Activated CD8-positive, alpha-beta memory T cell treated with anti-CD3 and anti-CD28 coated beads, Interleukin-2, amount 10 ng/mL, durations not matched to agents 7 days and 5 days (primary cell): ENCODE measurements at regions of chr6 and their contacts with region 1.

Region 1: DNA sequence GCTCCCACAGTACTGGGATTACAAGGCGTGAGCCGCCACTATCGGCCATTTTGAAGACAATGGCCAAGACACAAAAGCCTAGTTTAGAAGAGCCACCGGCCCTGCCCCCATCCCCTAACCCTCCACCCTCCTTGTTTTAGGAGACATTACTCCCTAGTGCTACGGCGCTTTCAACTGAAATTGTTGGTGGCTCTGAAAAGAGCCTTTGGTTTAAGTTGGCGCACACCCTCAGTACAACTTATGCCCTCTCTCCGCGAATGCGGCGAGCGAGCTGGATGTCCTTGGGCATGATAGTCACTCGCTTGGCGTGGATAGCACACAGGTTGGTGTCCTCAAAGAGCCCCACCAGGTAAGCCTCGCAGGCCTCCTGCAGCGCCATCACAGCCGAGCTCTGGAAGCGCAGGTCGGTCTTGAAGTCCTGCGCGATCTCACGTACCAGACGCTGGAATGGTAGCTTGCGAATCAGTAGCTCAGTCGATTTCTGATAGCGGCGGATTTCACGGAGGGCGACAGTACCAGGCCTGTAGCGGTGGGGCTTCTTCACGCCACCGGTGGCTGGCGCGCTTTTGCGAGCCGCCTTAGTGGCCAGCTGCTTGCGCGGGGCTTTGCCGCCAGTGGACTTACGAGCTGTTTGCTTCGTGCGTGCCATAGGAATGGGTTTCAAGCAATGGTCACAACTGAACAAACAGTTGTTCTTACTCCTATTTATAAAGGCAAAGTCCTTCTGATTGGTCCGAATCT is 114.9 kb upstream of the BTN3A2 start:
- DNase-seq: peak; percentile 88
- ATAC-seq: peak; percentile 56
- H3K4me3 Mint-ChIP-seq: peak overlapping the region; percentile 95
- H3K27ac Mint-ChIP-seq: peak overlapping the region; percentile 100
- H3K4me1 Mint-ChIP-seq: peaks cover 24% of the 10 kb centered on the region
- H3K27me3 Mint-ChIP-seq: no peaks in the 10 kb centered on the region

Region 2: DNA sequence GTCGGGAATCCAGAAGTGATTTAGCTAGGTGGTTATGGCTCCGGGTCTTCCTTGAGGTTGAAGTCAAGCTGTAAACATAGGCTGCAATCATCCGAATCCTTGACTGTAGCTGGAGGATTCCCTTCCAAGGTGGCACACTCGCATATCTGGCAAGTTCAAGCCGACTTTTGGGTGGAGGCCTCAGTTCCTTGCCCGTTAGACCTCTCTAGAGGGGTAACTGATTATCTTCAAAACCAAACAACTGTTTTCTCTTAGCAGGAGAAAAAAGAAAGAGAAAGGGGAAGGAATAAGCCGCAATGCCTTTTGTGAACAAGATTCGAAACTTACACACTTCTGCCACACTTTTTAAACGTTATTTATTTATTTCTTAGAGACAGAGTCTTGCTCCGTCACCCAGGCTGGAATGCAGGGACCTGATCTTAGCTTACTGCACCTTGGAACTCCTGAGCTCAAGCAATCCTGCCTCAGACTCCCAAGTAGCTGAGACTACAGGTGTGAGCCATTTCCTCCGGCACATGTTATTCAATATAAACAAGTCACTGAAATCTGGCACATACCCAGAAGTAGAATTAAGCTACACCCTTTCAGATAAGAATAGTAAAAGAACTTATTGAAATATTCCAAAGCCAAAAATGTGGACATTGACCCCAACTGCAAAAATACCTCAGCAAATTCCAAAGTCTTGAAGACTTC is 86.6 kb before region 1 on chr6:
- CTCF ChIA-PET with region 1: no interaction called
- DNase-seq: no peak
- ATAC-seq: no peak
- H3K4me3 Mint-ChIP-seq: no peak overlapping the region
- H3K27ac Mint-ChIP-seq: peak overlapping the region; percentile 61
- H3K4me1 Mint-ChIP-seq: peaks cover 43% of the 10 kb centered on the region
- H3K27me3 Mint-ChIP-seq: peaks cover 2% of the 10 kb centered on the region

Region 3: GRCh38 chr6:26234421-26235296 is 15.5 kb before region 1 on chr6:
- CTCF ChIA-PET with region 1: interaction called, 30 read pairs
- DNase-seq: peak; percentile 89
- ATAC-seq: peak; percentile 67
- H3K4me3 Mint-ChIP-seq: peak overlapping the region; percentile 82
- H3K27ac Mint-ChIP-seq: peak overlapping the region; percentile 98
- H3K4me1 Mint-ChIP-seq: peaks cover 38% of the 10 kb centered on the region
- H3K27me3 Mint-ChIP-seq: peaks cover 2% of the 10 kb centered on the region

Region 4: DNA sequence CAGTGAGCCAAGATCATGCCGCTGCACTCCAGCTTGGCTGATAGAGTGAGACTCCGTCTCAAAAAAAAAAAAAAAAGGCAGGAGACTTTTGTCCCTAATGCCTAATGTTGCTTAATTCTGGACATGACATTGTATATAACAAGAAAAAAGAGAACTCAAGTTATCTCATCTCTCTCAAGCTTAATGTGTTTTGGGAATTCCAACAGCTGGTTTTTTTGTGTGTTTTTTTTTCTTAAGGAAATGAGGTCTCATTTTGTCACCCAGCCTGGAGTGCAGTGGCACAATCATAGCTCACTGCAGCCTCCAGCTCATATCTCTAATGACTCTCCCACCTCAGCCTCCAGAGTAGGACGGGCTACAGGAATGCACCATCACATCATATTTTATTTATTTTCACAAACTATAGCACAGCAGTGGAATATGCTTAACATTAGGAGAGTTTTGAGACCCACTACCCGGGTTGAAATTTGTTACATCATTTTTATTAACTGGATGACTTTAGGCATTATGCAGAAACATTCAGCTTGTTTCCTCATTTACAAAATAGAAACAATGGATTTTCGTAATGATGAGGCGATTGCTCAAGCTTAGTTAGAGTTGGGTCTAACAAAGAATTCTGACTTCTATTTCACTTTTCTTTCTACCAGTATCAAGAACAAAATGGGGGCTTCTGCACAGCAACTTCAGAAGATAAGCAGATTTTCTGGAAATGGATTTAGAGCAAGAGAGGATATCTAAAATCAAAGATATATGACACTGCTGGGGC is 10.8 kb after region 1 on chr6:
- CTCF ChIA-PET with region 1: interaction called, 18 read pairs
- DNase-seq: no peak
- ATAC-seq: no peak
- H3K4me3 Mint-ChIP-seq: no peak overlapping the region
- H3K27ac Mint-ChIP-seq: no peak overlapping the region
- H3K4me1 Mint-ChIP-seq: peaks cover 5% of the 10 kb centered on the region
- H3K27me3 Mint-ChIP-seq: no peaks in the 10 kb centered on the region